ENCODE measurements at regions of chr6 and their contacts with region 1.

Region 1: GRCh38 chr6:149325648-149326236 is 8.2 kb downstream of the TAB2 start:
- DNase-seq: no peak
- ATAC-seq: no peak
- H3K4me3 Mint-ChIP-seq: no peak overlapping the region
- H3K27ac Mint-ChIP-seq: no peak overlapping the region
- H3K4me1 Mint-ChIP-seq: peaks cover 85% of the 10 kb centered on the region
- H3K27me3 Mint-ChIP-seq: no peaks in the 10 kb centered on the region
- CTCF ChIP-seq: no peak

Region 2: GRCh38 chr6:149060300-149060997 is 265.3 kb before region 1 on chr6:
- CTCF ChIA-PET with region 1: no interaction called
- POLR2A ChIA-PET with region 1: no interaction called
- intact Hi-C with region 1: no loop called
- DNase-seq: peak; percentile 34
- ATAC-seq: peak; percentile 90
- H3K4me3 Mint-ChIP-seq: peak overlapping the region; percentile 59
- H3K27ac Mint-ChIP-seq: peak overlapping the region; percentile 74
- H3K4me1 Mint-ChIP-seq: peaks cover 36% of the 10 kb centered on the region
- H3K27me3 Mint-ChIP-seq: no peaks in the 10 kb centered on the region
- CTCF ChIP-seq: no peak

Region 3: GRCh38 chr6:149335924-149336608 is 10.3 kb after region 1 on chr6:
- CTCF ChIA-PET with region 1: no interaction called
- POLR2A ChIA-PET with region 1: interaction called, 6 read pairs
- intact Hi-C with region 1: loop called (anchors 1 kb)
- DNase-seq: no peak
- ATAC-seq: peak; percentile 10
- H3K4me3 Mint-ChIP-seq: no peak overlapping the region
- H3K27ac Mint-ChIP-seq: peak overlapping the region; percentile 0
- H3K4me1 Mint-ChIP-seq: peaks cover 80% of the 10 kb centered on the region
- H3K27me3 Mint-ChIP-seq: no peaks in the 10 kb centered on the region
- CTCF ChIP-seq: no peak

Region 4: DNA sequence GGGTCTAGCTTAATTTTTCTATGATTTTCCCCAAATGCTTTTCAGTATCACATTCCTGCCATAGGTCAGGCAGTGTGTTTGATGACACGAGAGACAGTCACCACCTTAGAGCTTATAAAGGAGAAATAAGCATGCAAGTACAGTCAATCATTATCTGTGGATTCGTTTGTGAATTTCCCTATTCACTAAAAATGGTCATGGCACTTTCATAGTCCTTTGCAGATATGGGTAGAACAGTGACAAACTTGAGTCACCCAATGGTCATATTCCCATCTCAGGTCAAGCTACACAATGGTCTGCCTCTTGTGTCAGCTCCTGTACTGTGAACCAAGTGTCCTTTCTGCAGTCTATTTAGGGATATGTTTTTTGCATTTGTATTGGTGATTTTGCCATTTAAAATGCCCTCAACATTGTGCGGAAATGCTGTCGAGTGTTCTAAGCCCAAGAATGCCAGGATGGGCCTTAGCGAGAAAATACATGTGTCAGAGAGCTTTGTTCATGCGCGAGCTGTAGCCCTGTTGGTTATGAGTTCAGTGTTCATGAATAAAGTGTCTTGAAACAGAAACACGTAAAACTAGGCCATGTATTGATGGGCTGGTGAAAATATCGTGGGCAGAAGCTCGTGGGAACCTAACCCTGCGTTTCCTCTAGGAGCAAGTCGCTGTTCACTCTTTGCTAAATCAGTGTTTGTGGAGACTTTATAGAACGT is 94.1 kb after region 1 on chr6:
- CTCF ChIA-PET with region 1: no interaction called
- POLR2A ChIA-PET with region 1: interaction called, 10 read pairs
- intact Hi-C with region 1: no loop called
- DNase-seq: no peak
- ATAC-seq: no peak
- H3K4me3 Mint-ChIP-seq: no peak overlapping the region
- H3K27ac Mint-ChIP-seq: no peak overlapping the region
- H3K4me1 Mint-ChIP-seq: peaks cover 2% of the 10 kb centered on the region
- H3K27me3 Mint-ChIP-seq: no peaks in the 10 kb centered on the region
- CTCF ChIP-seq: no peak

Region 5: DNA sequence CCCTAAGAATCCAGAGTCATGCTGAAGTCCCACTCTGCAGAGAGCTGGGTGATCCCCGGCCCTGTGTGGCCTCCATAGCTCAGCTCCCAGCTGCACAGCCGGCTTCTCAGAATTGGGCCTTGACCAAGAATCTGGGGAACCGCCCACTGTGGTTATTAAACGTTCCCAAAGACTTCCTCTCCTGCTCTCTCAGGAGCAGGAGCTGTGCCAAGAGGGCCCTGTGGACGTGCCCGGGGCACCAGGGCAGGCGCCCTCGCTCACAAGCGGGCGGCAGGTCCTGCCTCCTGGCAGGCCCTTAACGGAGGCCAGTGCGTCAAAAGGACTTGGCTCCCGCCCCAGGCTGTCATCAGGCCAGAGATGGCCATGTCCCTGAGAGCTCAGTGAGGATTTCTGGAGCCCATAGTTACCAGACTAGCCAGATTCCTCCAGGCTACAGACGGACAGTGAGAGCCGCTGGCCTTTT is 128.7 kb after region 1 on chr6:
- CTCF ChIA-PET with region 1: no interaction called
- POLR2A ChIA-PET with region 1: no interaction called
- intact Hi-C with region 1: no loop called
- DNase-seq: no peak
- ATAC-seq: no peak
- H3K4me3 Mint-ChIP-seq: no peak overlapping the region
- H3K27ac Mint-ChIP-seq: no peak overlapping the region
- H3K4me1 Mint-ChIP-seq: peaks cover 19% of the 10 kb centered on the region
- H3K27me3 Mint-ChIP-seq: no peaks in the 10 kb centered on the region
- CTCF ChIP-seq: no peak

Measured in activated B cell treated with CpG ODN at 0.5 μM for 24 hours (primary cell).